Activated T-helper 1 cell treated with anti-CD3 and anti-CD28 coated beads, Interleukin-12 subunit alpha, Interleukin-12 subunit beta, Interleukin-2, Interleukin-4 antibody, amounts not matched to agents 30 ng/mL and 10 ng/mL and 1 ng/mL, durations not matched to agents 14 hours and 24 hours and 36 hours (primary cell): ENCODE measurements at regions of chr1 and their contacts with region 1.

Region 1: DNA sequence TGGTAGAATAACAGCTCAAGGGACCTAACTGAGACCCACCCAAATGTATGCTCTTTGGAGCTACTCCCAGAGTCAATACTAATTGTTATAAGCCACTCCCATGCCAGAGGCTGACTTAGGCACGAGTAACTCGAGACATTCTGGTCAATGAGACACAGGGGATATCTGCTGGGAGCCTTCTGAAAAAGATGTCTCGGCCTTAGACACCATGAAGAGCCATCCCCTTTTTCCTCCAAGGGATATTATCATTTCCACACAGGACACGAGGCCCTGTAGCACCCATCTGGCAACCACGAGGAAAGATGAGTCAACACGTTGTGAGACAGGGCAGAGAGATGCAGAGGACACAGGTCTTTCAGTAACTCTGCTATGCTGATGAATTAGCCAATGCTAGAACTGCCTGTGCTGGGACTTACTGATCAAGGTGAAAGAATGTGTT is 30.7 kb downstream of the ITPKB start:
- DNase-seq: no peak
- H3K4me3 Mint-ChIP-seq: peak overlapping the region; percentile 59
- H3K27ac Mint-ChIP-seq: peak overlapping the region; percentile 94
- H3K4me1 Mint-ChIP-seq: peaks cover 72% of the 10 kb centered on the region
- H3K27me3 Mint-ChIP-seq: peaks cover 1% of the 10 kb centered on the region

Region 2: DNA sequence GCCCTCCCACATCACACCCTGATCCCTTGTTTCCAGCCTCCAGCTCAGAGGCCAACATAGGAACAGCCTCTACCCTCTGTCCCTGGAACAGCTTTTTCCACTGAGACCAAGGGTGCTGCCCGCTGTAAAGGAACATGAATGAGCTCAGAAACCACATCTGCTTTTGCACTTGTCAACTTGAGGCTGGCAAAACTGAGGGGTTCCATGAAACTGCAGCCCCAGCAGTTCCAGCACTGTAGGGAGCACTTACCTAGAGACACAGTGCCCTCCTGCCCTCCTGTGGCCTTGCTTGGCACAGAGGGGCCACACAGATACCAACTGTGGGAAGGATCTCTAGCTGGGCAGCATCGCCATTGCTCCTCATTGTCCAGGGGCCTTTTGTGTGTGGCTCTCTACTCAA is 20.9 kb before region 1 on chr1:
- intact Hi-C with region 1: loop called (anchors 1 kb)
- DNase-seq: no peak
- H3K4me3 Mint-ChIP-seq: peak overlapping the region; percentile 29
- H3K27ac Mint-ChIP-seq: peak overlapping the region; percentile 83
- H3K4me1 Mint-ChIP-seq: peaks cover 97% of the 10 kb centered on the region
- H3K27me3 Mint-ChIP-seq: no peaks in the 10 kb centered on the region

Region 3: DNA sequence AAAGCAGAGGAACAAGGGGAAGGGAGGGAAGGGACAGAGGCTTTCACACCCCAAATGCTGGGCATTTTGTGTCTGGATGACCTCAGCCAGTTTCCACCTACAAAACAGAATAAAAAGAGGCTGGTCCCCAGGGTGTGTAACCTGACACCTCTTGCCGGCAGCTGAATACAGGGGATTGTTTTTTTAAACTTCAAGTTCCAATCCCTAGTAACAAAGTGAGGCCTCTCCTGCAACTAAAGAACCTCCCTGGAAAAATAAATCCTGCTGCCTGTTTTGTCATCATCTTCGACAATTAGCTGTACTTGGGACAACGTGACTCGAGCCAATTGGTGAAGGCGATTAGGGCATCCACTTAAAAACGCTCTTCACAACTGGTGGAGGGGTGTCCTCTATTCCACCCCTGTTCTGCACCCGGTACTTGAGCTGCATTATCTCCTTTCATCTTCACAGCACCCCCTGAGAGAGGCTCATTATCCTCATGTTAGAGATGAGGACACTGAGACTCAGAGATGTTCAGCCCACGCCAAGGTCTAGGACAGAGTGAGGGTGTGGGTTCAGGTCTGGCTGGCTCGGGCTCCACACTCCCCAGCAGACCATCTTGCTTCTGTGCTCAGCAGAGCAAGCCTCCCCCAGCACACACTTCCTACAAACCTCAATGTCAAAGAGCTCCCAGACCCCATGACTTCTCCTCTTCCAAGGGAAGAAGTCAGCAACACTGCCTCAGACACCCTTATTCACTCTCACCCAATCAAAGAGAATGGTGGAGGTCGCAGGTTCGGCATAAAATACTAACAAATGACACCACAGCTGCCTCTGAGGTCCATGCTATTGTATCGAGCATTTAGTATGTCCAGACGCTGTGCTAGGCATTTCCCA is 15.5 kb after region 1 on chr1:
- intact Hi-C with region 1: loop called (anchors 1 kb)
- DNase-seq: no peak
- H3K4me3 Mint-ChIP-seq: peak overlapping the region; percentile 73
- H3K27ac Mint-ChIP-seq: peak overlapping the region; percentile 93
- H3K4me1 Mint-ChIP-seq: peaks cover 84% of the 10 kb centered on the region
- H3K27me3 Mint-ChIP-seq: no peaks in the 10 kb centered on the region

Region 4: GRCh38 chr1:227192163-227192562 is 483.8 kb after region 1 on chr1:
- intact Hi-C with region 1: no loop called
- DNase-seq: peak; percentile 2
- H3K4me3 Mint-ChIP-seq: no peak overlapping the region
- H3K27ac Mint-ChIP-seq: no peak overlapping the region
- H3K4me1 Mint-ChIP-seq: peaks cover 9% of the 10 kb centered on the region
- H3K27me3 Mint-ChIP-seq: peaks cover 11% of the 10 kb centered on the region